ENCODE measurements at regions of chr5 and their contacts with region 1.

Region 1: DNA sequence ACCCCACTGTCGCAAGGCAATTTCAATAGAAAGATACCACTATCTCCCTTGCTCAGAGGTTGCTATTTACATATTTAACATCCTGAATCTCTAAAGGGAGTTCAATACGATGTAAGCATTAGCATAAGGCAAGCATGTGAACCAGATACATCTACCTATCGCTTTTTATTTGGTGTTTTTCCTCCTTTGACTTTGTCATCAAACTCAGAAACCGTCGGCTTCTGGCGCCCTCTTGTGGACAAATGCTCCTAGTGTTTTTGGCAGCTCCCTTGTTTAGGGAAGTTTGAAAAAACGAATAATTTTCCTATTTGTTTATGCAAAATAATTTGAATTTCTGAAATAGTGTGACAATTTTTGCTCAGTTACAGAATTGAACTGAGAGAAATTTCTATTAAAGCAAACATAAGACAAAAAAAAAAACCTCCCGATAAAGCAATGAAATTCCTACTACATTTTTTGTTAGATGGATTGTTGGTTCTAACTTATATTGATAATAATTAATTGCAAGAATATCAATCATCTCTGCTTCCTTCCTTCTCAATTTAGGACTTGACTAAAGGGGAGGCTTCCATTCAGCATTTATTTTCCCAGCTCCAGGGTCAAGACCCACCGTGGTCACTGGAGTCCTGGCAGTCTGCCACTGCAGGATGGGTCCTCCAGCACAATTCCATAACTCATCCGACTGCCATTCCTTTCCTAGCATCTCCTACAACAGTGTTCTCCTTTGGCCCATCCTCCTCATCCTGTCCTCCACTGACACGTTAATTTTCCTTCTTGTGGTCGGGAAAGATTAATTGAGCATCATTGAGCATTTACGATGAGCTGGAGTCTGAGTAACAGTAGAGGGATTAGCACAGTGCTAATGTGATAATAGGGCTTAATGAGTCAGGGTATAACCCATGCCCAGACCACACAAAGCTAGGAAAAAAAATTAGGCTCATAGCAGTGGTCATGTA is 131.8 kb upstream of the CHD1 start:
- DNase-seq: peak; percentile 69 to 72
- H3K4me3 ChIP-seq: no peak overlapping the region
- H3K4me3 Mint-ChIP-seq: no peak overlapping the region
- H3K27ac Mint-ChIP-seq: no peak overlapping the region
- H3K4me1 ChIP-seq: no peaks in the 10 kb centered on the region
- H3K4me1 Mint-ChIP-seq: peaks cover 13% of the 10 kb centered on the region
- H3K27me3 ChIP-seq: no peaks in the 10 kb centered on the region
- H3K27me3 Mint-ChIP-seq: peaks cover 8% of the 10 kb centered on the region
- CTCF ChIP-seq: peak; percentile 83 to 87

Region 2: GRCh38 chr5:98796197-98796972 is 264.2 kb before region 1 on chr5:
- CTCF ChIA-PET with region 1: no interaction called
- POLR2A ChIA-PET with region 1: no interaction called
- intact Hi-C with region 1: loop called (anchors 1 kb)
- DNase-seq: peak; percentile 62 to 71
- H3K4me3 ChIP-seq: no peak overlapping the region
- H3K4me3 Mint-ChIP-seq: peak overlapping the region; percentile 17
- H3K27ac Mint-ChIP-seq: peak overlapping the region; percentile 62
- H3K4me1 ChIP-seq: no peaks in the 10 kb centered on the region
- H3K4me1 Mint-ChIP-seq: peaks cover 7% of the 10 kb centered on the region
- H3K27me3 ChIP-seq: no peaks in the 10 kb centered on the region
- H3K27me3 Mint-ChIP-seq: no peaks in the 10 kb centered on the region
- CTCF ChIP-seq: peak; percentile 65 to 86

Region 3: GRCh38 chr5:98905857-98906690 is 154.5 kb before region 1 on chr5:
- CTCF ChIA-PET with region 1: interaction called, 3 read pairs
- POLR2A ChIA-PET with region 1: no interaction called
- intact Hi-C with region 1: loop called (anchors 1 kb)
- DNase-seq: peak in 1 of 2 experiments; percentile 47
- H3K4me3 ChIP-seq: no peak overlapping the region
- H3K4me3 Mint-ChIP-seq: no peak overlapping the region
- H3K27ac Mint-ChIP-seq: no peak overlapping the region
- H3K4me1 ChIP-seq: no peaks in the 10 kb centered on the region
- H3K4me1 Mint-ChIP-seq: peaks cover 6% of the 10 kb centered on the region
- H3K27me3 ChIP-seq: no peaks in the 10 kb centered on the region
- H3K27me3 Mint-ChIP-seq: no peaks in the 10 kb centered on the region
- CTCF ChIP-seq: peak; percentile 59 to 68

Region 4: DNA sequence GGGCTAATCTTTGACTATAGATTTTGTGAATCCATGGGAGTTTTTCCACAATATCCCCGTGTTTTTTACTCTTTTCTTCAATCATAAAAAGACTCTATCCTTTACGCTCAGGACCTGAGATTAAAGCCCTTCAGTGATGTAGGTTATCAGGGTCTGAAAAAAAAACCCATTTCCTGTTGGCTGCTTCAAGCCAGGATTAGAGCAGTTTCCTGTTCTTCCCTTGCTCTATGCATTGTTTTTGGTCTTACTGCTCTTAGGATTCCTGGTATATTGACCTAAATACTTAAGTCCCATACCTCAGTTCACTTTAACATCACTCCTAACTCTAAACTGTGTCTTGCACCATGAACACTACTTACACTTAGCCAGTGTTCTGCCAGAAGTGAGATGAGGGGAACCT is 187.5 kb after region 1 on chr5:
- CTCF ChIA-PET with region 1: no interaction called
- POLR2A ChIA-PET with region 1: no interaction called
- intact Hi-C with region 1: no loop called
- DNase-seq: no peak
- H3K4me3 ChIP-seq: no peak overlapping the region
- H3K4me3 Mint-ChIP-seq: no peak overlapping the region
- H3K27ac Mint-ChIP-seq: no peak overlapping the region
- H3K4me1 ChIP-seq: no peaks in the 10 kb centered on the region
- H3K4me1 Mint-ChIP-seq: no peaks in the 10 kb centered on the region
- H3K27me3 ChIP-seq: no peaks in the 10 kb centered on the region
- H3K27me3 Mint-ChIP-seq: no peaks in the 10 kb centered on the region
- CTCF ChIP-seq: no peak

Measured in Caco-2 (cell line).